Esophagus muscularis mucosa (tissue), 4 donors: ENCODE measurements at regions of chr10 and their contacts with region 1.

Region 1: GRCh38 chr10:86399879-86400704 is 33.5 kb upstream of the GRID1 start:
- DNase-seq: peak; percentile 96
- H3K4me3 ChIP-seq: peak overlapping the region; percentile 62 to 88 (median 67)
- H3K27ac ChIP-seq: peak overlapping the region; percentile 65 to 95 (median 88)
- H3K4me1 ChIP-seq: peaks cover 36 to 38% (median 37%) of the 10 kb centered on the region in 4 donors
- H3K27me3 ChIP-seq: peaks cover 0 to 8% (median 0%) of the 10 kb centered on the region in 4 donors
- CTCF ChIP-seq: peak; percentile 92 to 96 (median 95)
- EP300 ChIP-seq: no peak
- POLR2A ChIP-seq: peak; percentile 1

Region 2: DNA sequence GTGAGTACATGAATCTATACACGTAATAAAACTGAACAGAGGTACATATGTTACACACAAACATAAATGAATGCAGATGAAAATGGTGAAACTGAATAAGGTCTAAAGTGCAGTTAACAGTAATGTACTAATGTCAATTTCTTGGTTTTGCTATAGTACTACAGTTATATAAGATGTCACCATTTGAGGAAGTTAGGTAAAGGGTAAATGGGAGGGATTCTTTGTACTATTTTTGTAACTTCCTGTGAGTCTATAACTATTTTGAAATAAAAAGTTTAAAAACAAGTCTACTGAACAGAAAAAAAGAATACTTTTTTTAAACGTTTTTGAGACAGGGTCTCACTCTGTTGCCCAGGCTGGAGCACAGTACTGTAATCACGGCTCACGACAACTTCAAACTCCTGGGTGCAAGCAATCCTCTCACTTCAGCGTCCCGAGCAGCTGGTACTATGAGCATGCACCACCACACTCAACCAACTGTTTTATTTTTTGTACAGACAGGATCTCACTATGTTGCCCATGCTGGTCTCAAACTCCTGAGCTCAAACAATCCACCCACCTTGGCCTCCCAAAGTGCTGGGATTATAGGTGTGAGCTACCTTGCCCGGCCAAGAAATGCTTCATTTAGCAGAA is 50.0 kb after region 1 on chr10:
- intact Hi-C with region 1: loop called (anchors 5 kb)
- DNase-seq: no peak
- H3K4me3 ChIP-seq: no peak overlapping the region
- H3K27ac ChIP-seq: no peak overlapping the region
- H3K4me1 ChIP-seq: peaks cover 0 to 11% (median 2%) of the 10 kb centered on the region in 4 donors
- H3K27me3 ChIP-seq: no peaks in the 10 kb centered on the region
- CTCF ChIP-seq: no peak
- EP300 ChIP-seq: no peak
- POLR2A ChIP-seq: no peak

Region 3: GRCh38 chr10:86585037-86585725 is 185.1 kb after region 1 on chr10:
- intact Hi-C with region 1: loop called (anchors 2 kb)
- DNase-seq: no peak
- H3K4me3 ChIP-seq: no peak overlapping the region
- H3K27ac ChIP-seq: peak overlapping the region in 1 of 4 donors; percentile 24
- H3K4me1 ChIP-seq: peaks cover 8 to 12% (median 9%) of the 10 kb centered on the region in 4 donors
- H3K27me3 ChIP-seq: no peaks in the 10 kb centered on the region
- CTCF ChIP-seq: peak in 2 of 3 experiments; percentile 92
- EP300 ChIP-seq: no peak
- POLR2A ChIP-seq: no peak